Right ventricle myocardium inferior (tissue), 1 donor: ENCODE measurements at regions of chr1 and their contacts with region 1.

Region 1: DNA sequence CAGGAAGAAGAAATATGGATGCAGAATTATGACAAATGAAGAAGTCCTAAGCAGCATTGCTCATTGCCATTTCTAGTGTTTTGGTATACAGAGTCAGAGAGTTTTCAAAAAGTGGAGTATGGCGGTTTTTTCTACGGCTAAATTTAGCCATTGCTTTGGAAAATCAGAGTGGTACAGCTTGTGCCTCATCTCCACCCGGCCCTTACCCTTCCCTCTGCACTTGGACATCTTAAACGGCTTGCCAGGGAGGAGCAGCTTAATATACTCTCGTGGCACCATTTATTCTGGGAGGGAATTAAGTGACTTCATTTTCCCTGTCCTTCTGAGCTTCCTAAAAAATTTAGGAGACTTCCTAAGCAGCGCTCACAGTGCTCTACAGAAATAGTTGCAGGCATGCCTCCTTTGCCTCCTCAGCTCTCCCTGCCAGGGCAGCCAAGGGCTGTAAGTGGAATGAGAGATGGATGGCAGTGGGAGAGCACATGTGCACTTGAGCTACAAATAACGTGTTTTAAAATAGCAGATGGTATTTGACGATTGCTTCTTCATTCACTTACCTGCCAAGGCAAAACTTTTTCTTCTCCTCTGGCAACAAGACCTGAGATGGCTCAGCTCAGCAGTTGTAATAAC is 51.5 kb upstream of the VAMP3 start:
- DNase-seq: no peak
- ATAC-seq: peak; percentile 64

Region 2: DNA sequence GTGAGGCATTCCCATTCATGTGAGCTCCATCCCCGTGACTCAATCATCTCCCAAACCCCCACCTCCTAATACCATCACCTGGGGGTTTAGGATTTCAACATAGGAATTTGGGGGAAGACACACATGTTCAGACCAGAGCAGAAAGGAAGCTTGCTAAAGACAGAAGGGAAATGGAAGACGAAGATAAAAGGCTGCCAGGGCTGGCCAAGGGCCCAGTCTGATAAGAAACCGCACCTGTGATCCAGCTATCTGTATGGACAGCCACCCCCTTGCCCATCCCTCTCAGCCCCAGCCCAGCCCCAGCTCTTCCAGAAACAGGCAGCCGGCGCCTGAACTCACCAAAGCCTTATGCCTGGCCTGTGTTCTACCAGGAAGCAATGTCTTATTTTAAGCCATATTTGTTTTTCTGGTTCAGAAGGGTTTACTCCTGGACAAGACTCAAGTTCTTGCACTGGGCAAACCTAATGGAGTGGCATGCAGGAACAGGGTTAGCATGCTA is 146.9 kb before region 1 on chr1:
- intact Hi-C with region 1: no loop called
- DNase-seq: peak; percentile 44
- ATAC-seq: no peak

Region 3: DNA sequence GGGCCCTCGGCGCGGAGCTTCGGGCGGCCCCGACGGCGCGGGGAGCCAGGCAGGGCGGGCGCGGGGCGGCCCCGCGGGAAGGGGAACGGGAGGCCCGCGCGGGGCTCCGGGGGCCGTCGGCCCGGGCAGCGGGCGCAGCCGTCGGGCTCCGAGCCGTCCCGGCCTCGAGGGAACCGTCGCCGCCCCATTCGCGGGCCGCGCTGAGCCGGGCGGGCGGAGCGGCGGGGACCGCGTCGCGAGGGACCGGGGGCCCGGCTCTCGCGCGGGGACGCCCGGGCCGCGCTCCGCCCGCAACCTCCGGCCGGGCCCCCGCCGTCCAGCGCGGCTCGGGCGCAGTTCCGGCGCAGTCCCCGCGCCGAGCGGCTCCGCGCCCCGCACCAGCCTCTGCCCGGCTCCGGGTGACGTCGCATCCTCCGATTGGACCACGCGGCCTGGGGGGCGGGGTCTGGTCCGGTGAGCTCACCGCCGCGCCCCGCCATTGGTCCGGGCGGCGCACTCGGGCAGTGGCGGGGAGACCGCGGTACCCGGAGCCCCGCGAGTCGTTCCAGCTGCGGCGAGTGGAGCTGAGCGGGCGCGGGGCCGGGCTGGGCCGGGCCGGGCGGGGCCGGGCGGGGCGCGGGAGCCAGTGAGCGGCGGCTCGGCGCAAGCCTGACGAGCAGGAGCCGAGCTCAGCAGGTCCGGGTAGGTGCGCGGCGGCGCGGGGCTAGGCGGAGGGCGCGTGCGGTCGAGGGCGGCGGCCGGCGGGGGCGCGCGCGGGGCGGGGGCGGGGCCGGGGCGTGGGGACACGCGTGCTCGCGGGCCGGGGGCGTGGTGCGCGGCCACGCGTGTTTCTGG is 15.2 kb before region 1 on chr1:
- intact Hi-C with region 1: loop called (anchors 2 kb)
- DNase-seq: peak; percentile 97
- ATAC-seq: peak; percentile 99

Region 4: DNA sequence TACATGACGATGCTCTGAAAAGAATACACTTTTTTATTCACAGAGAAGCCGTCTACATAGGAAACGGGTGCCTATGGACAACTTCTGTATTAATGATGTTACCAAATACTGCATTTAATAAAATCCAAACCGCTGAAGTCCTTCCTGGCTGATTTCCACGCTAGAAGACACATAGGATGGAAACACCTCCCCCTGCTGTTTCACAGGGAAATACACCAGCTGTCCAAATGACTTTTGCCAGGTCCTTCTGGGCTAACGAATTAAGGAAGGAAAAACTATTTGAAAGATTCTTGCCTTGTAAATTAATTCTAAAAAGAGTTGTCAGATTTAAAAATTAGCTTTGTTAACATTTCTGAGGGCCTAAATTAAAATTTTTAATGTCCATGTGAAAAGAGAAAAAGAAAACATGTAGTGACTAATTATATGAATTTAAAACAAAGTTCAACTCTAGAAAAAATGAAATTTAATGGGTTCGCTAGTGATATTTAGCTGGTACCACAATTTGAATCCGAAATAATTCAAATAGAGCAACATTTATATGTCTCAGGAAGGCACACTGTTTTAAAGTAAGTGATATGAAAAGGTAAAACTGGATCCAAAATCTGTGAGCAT is 951.8 kb after region 1 on chr1:
- intact Hi-C with region 1: no loop called
- DNase-seq: no peak
- ATAC-seq: peak; percentile 67